ENCODE measurements at regions of chr1 and their contacts with region 1.

Region 1: GRCh38 chr1:59759156-59759925 is 55.4 kb upstream of the HOOK1 start:
- DNase-seq: peak; percentile 48 to 83 (median 65)
- ATAC-seq: peak; percentile 96
- H3K4me3 ChIP-seq: no peak overlapping the region
- H3K4me3 Mint-ChIP-seq: no peak overlapping the region
- H3K27ac ChIP-seq: no peak overlapping the region
- H3K27ac Mint-ChIP-seq: no peak overlapping the region
- H3K4me1 ChIP-seq: no peaks in the 10 kb centered on the region
- H3K4me1 Mint-ChIP-seq: peaks cover 6% of the 10 kb centered on the region
- H3K27me3 ChIP-seq: no peaks in the 10 kb centered on the region
- H3K27me3 Mint-ChIP-seq: no peaks in the 10 kb centered on the region
- CTCF ChIP-seq: peak; percentile 95

Region 2: DNA sequence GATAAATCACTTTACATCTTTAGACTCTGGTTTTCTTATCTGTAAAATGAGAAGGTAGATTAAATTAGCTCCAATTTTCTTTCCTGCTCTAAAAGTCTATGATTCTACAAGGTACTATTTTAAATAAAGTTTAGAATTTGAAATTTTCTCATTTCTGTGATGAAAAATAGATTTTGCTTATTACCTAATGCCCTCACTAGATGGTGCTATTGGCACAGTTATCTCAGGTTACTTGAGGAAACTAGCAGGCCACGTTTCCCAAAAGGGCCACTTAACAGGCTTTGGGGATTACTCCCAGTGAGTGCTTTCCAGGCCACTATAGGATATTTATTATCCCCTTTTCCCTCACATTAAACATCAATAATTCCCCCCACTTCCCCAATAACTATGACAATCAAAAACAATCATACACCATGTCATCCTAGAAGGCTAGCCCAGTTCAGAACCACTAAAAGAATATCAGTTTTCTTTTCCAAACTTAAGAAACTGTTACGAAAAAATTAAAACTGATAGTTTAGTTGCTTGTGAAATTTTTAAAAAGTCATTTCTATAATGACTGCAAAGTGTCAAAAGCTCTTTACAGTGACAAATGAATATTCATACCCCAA is 1243.4 kb before region 1 on chr1:
- CTCF ChIA-PET with region 1: interaction called, 21 read pairs
- POLR2A ChIA-PET with region 1: no interaction called
- intact Hi-C with region 1: loop called (anchors 1 kb)
- DNase-seq: peak in 5 of 9 experiments; percentile 16 to 82 (median 27)
- ATAC-seq: peak; percentile 42
- H3K4me3 ChIP-seq: no peak overlapping the region
- H3K4me3 Mint-ChIP-seq: no peak overlapping the region
- H3K27ac ChIP-seq: no peak overlapping the region
- H3K27ac Mint-ChIP-seq: peak overlapping the region; percentile 71
- H3K4me1 ChIP-seq: no peaks in the 10 kb centered on the region
- H3K4me1 Mint-ChIP-seq: peaks cover 8% of the 10 kb centered on the region
- H3K27me3 ChIP-seq: no peaks in the 10 kb centered on the region
- H3K27me3 Mint-ChIP-seq: no peaks in the 10 kb centered on the region
- CTCF ChIP-seq: peak; percentile 72

Region 3: GRCh38 chr1:58546520-58547308 is 1212.6 kb before region 1 on chr1 and contains the start of gene OMA1:
- CTCF ChIA-PET with region 1: interaction called, 3 read pairs
- POLR2A ChIA-PET with region 1: no interaction called
- intact Hi-C with region 1: loop called in 1 of 2 experiments (anchors 1 kb)
- DNase-seq: peak; percentile 95 to 99 (median 98)
- ATAC-seq: peak; percentile 92
- H3K4me3 ChIP-seq: peak within 1 kb of the TSS; percentile 63 to 77
- H3K4me3 Mint-ChIP-seq: peak within 1 kb of the TSS; percentile 97
- H3K27ac ChIP-seq: peak within 1 kb of the TSS; percentile 95 to 97
- H3K27ac Mint-ChIP-seq: peak within 1 kb of the TSS; percentile 99
- H3K4me1 ChIP-seq: peaks cover 12% of the 10 kb centered on the region
- H3K4me1 Mint-ChIP-seq: peaks cover 32% of the 10 kb centered on the region
- H3K27me3 ChIP-seq: no peaks in the 10 kb centered on the region
- H3K27me3 Mint-ChIP-seq: no peaks in the 10 kb centered on the region
- CTCF ChIP-seq: peak; percentile 97
- total RNA-seq, gene OMA1: 25.1 to 31.2 TPM

Region 4: GRCh38 chr1:58652651-58653184 is 1106.6 kb before region 1 on chr1:
- CTCF ChIA-PET with region 1: interaction called, 7 read pairs
- POLR2A ChIA-PET with region 1: no interaction called
- intact Hi-C with region 1: loop called (anchors 1 kb)
- DNase-seq: peak; percentile 11 to 83 (median 53)
- ATAC-seq: peak; percentile 90
- H3K4me3 ChIP-seq: no peak overlapping the region
- H3K4me3 Mint-ChIP-seq: no peak overlapping the region
- H3K27ac ChIP-seq: no peak overlapping the region
- H3K27ac Mint-ChIP-seq: no peak overlapping the region
- H3K4me1 ChIP-seq: peaks cover 14% of the 10 kb centered on the region
- H3K4me1 Mint-ChIP-seq: peaks cover 23% of the 10 kb centered on the region
- H3K27me3 ChIP-seq: no peaks in the 10 kb centered on the region
- H3K27me3 Mint-ChIP-seq: no peaks in the 10 kb centered on the region
- CTCF ChIP-seq: peak; percentile 84

Region 5: DNA sequence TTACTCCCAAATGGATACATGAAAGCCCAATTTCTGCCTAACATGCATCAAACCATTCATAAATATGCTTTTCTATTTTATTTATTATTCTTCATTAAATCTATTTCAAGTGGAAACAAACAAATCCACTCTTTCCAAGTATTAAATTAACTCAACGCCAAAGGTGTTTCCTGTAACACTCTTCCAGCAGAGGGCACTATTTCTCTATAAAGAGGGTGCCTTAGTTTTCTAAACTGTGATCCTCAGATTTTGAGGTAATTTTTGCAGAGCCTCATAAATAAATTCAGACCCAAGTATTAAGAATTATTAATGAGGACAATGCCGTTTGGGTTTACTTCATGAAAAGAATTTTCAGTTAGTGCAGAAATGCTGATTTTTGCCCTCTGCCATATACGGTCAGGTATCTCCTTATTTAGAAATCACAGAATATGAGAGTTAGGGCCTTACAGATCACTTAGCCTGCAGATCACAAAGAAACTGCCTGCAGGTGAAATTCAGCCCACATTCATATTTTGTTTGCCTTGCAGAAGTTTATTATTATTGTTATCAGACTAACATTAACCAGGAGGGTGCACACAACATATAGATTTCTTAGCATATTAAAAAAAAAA is 1019.4 kb before region 1 on chr1:
- CTCF ChIA-PET with region 1: interaction called, 11 read pairs
- POLR2A ChIA-PET with region 1: no interaction called
- intact Hi-C with region 1: loop called (anchors 1 kb)
- DNase-seq: peak in 3 of 9 experiments; percentile 35 to 76 (median 67)
- ATAC-seq: peak; percentile 49
- H3K4me3 ChIP-seq: no peak overlapping the region
- H3K4me3 Mint-ChIP-seq: no peak overlapping the region
- H3K27ac ChIP-seq: no peak overlapping the region
- H3K27ac Mint-ChIP-seq: no peak overlapping the region
- H3K4me1 ChIP-seq: no peaks in the 10 kb centered on the region
- H3K4me1 Mint-ChIP-seq: peaks cover 5% of the 10 kb centered on the region
- H3K27me3 ChIP-seq: no peaks in the 10 kb centered on the region
- H3K27me3 Mint-ChIP-seq: peaks cover 2% of the 10 kb centered on the region
- CTCF ChIP-seq: peak; percentile 98

Region 6: GRCh38 chr1:59747420-59748024 is 11.8 kb before region 1 on chr1:
- CTCF ChIA-PET with region 1: interaction called, 16 read pairs
- POLR2A ChIA-PET with region 1: no interaction called
- intact Hi-C with region 1: no loop called
- DNase-seq: no peak
- ATAC-seq: no peak
- H3K4me3 ChIP-seq: no peak overlapping the region
- H3K4me3 Mint-ChIP-seq: no peak overlapping the region
- H3K27ac ChIP-seq: no peak overlapping the region
- H3K27ac Mint-ChIP-seq: no peak overlapping the region
- H3K4me1 ChIP-seq: no peaks in the 10 kb centered on the region
- H3K4me1 Mint-ChIP-seq: no peaks in the 10 kb centered on the region
- H3K27me3 ChIP-seq: no peaks in the 10 kb centered on the region
- H3K27me3 Mint-ChIP-seq: no peaks in the 10 kb centered on the region
- CTCF ChIP-seq: no peak

Region 7: DNA sequence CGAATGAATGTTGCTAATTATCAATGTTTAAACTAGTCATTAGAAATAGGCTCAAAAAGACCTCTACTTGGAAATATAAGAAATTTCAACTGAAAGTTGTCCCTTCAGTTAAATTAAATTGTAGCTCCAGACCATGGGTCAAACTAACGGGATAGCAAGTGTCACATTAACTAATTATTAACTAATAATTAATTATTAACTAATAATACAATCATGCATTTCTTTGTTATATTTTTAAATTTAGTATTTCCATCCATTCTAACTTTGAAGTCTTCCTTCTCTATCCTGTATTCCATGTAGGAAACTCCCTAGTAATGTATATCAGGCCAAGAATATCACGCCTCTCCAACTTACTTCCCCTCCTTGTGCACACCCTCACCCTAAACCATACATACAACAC is 12.0 kb after region 1 on chr1:
- CTCF ChIA-PET with region 1: interaction called, 20 read pairs
- POLR2A ChIA-PET with region 1: interaction called, 3 read pairs
- intact Hi-C with region 1: no loop called
- DNase-seq: no peak
- ATAC-seq: no peak
- H3K4me3 ChIP-seq: no peak overlapping the region
- H3K4me3 Mint-ChIP-seq: no peak overlapping the region
- H3K27ac ChIP-seq: no peak overlapping the region
- H3K27ac Mint-ChIP-seq: no peak overlapping the region
- H3K4me1 ChIP-seq: no peaks in the 10 kb centered on the region
- H3K4me1 Mint-ChIP-seq: no peaks in the 10 kb centered on the region
- H3K27me3 ChIP-seq: no peaks in the 10 kb centered on the region
- H3K27me3 Mint-ChIP-seq: peaks cover 2% of the 10 kb centered on the region
- CTCF ChIP-seq: no peak

Region 8: GRCh38 chr1:60716472-60716871 is 957.1 kb after region 1 on chr1:
- CTCF ChIA-PET with region 1: no interaction called
- POLR2A ChIA-PET with region 1: no interaction called
- intact Hi-C with region 1: no loop called
- DNase-seq: no peak
- ATAC-seq: no peak
- H3K4me3 ChIP-seq: no peak overlapping the region
- H3K4me3 Mint-ChIP-seq: no peak overlapping the region
- H3K27ac ChIP-seq: no peak overlapping the region
- H3K27ac Mint-ChIP-seq: no peak overlapping the region
- H3K4me1 ChIP-seq: no peaks in the 10 kb centered on the region
- H3K4me1 Mint-ChIP-seq: no peaks in the 10 kb centered on the region
- H3K27me3 ChIP-seq: no peaks in the 10 kb centered on the region
- H3K27me3 Mint-ChIP-seq: no peaks in the 10 kb centered on the region
- CTCF ChIP-seq: no peak

Measured in CD8-positive, alpha-beta T cell (primary cell).